ENCODE measurements at regions of chr3 and their contacts with region 1.

Region 1: DNA sequence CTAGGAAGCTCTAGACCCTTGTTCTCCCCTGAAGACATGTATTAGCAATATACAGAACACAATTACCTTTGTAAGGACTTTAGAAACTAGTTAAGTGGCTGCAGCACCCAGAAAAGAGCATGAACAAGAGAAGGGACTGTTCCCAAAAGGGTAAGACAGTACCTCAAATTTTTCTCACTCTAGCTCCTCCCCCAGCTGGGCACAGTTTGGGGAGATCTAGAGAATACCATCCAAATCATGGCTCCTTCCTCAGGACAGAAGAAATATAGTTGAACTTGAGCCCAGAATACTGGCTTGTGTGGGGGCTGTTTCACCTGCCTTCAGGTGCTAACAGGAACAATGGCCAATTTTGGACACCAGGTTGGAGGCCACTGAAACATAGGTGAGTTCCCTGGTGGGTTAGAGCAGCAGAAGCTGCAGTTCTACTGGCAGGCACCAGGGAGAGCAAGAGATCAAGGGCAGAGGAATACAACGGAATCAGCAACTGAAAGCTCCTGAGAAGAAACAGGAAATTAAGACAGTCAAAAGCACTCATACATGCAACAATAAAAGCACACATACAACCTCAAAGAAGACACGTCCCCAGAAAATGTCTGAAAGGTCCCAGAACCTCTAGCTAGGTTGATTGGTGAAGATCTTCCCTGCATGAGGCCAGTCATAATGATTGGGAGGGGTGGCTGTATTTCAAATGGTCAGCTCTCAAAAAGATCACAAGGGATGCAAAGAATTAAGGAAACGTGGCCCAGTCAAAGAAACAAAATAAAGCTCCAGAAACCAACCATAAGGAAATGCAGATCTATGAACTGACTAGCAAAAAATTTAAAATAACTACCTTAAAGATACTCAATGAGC is 104.9 kb upstream of the ASB14 start:
- DNase-seq: peak; percentile 62
- H3K4me3 ChIP-seq: no peak overlapping the region
- H3K27ac ChIP-seq: no peak overlapping the region
- H3K4me1 ChIP-seq: no peaks in the 10 kb centered on the region
- H3K27me3 ChIP-seq: no peaks in the 10 kb centered on the region
- CTCF ChIP-seq: peak; percentile 90 to 95
- POLR2A ChIP-seq: no peak

Region 2: DNA sequence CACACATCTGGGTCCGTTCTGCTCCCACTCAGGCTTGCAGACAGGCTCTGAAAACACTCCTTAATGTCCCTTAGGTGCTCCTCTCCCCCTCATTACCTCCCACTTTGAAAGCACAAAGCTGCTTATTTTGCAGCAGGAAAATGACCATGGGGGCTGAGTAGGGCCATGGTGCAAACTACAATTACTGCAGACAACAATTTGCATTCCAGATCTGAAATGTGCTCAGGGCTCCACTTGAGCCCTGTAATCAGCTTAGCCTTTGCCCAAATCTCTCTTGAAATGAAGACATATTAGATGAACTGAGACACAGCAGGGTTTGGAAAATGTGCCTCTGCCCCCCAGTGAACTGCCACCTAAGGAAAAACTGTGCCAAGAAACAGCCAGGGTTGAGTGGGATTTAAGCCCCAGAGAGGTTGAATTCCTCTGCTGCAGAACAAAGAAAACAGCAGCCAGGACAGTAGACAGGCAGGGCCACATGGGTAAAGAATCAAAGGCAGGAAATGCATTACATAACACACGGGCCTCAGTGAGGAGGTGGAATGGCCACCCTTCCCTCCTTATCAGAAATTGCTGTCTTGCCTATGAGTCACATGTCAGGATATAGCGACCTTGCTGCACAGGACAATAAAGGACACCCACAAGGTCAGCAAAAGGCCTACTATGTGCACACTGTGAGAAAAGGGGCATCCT is 468.9 kb before region 1 on chr3:
- CTCF ChIA-PET with region 1: no interaction called
- POLR2A ChIA-PET with region 1: no interaction called
- dilution Hi-C with region 1: no loop called
- intact Hi-C with region 1: no loop called
- DNase-seq: peak; percentile 76
- H3K4me3 ChIP-seq: no peak overlapping the region
- H3K27ac ChIP-seq: peak overlapping the region; percentile 57
- H3K4me1 ChIP-seq: peaks cover 81% of the 10 kb centered on the region
- H3K27me3 ChIP-seq: no peaks in the 10 kb centered on the region
- CTCF ChIP-seq: no peak
- POLR2A ChIP-seq: no peak

Region 3: DNA sequence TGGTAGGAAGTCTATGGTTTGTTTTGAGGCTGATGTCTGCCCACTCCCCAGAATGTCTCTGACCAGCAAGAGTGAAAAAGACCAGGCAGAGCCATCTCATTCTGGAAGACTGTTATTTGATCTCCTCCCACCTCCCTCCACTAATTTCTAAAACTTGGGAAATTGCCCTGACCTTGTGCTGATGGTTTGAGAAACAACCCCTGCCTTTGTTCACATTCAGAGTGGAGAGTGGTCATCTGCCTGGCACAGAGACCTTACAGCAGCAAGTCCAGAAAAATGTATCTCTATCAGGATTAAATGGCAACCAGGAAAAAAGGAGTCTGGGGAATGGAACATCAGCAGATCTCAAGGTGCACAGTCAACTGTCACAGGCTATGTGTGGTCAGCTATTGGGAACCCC is 311.2 kb before region 1 on chr3:
- CTCF ChIA-PET with region 1: no interaction called
- POLR2A ChIA-PET with region 1: no interaction called
- dilution Hi-C with region 1: no loop called
- intact Hi-C with region 1: no loop called
- DNase-seq: no peak
- H3K4me3 ChIP-seq: no peak overlapping the region
- H3K27ac ChIP-seq: no peak overlapping the region
- H3K4me1 ChIP-seq: peaks cover 5% of the 10 kb centered on the region
- H3K27me3 ChIP-seq: peaks cover 0 to 4% of the 10 kb centered on the region in 2 experiments
- CTCF ChIP-seq: no peak
- POLR2A ChIP-seq: no peak

Region 4: DNA sequence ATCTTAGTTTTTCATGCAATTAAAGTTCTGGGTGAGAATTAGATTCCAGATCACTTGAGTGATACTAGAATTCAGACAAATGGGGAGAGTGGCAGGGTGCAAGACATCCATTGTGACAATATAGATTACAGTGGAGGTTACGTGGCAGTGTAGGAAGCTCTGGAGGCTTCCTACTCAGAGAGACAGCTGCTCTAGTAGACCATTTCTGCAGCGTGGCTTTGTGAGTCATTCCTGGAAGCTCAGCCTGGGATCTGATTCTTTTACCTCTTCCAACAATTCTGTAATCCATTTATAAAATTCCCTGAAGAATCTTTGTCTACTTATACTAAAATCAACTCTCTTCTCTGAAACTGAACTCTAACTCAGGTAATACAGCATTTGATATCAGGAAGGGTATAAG is 14.5 kb before region 1 on chr3:
- CTCF ChIA-PET with region 1: interaction called, 24 read pairs
- POLR2A ChIA-PET with region 1: no interaction called
- dilution Hi-C with region 1: no loop called
- intact Hi-C with region 1: no loop called
- DNase-seq: no peak
- H3K4me3 ChIP-seq: no peak overlapping the region
- H3K27ac ChIP-seq: no peak overlapping the region
- H3K4me1 ChIP-seq: no peaks in the 10 kb centered on the region
- H3K27me3 ChIP-seq: peaks cover 2 to 4% of the 10 kb centered on the region in 2 experiments
- CTCF ChIP-seq: no peak
- POLR2A ChIP-seq: no peak

Region 5: GRCh38 chr3:57446318-57446841 is 49.0 kb after region 1 on chr3:
- CTCF ChIA-PET with region 1: interaction called, 10 read pairs
- POLR2A ChIA-PET with region 1: no interaction called
- dilution Hi-C with region 1: no loop called
- intact Hi-C with region 1: no loop called
- DNase-seq: no peak
- H3K4me3 ChIP-seq: no peak overlapping the region
- H3K27ac ChIP-seq: no peak overlapping the region
- H3K4me1 ChIP-seq: peaks cover 15% of the 10 kb centered on the region
- H3K27me3 ChIP-seq: no peaks in the 10 kb centered on the region
- CTCF ChIP-seq: no peak
- POLR2A ChIP-seq: no peak

Region 6: DNA sequence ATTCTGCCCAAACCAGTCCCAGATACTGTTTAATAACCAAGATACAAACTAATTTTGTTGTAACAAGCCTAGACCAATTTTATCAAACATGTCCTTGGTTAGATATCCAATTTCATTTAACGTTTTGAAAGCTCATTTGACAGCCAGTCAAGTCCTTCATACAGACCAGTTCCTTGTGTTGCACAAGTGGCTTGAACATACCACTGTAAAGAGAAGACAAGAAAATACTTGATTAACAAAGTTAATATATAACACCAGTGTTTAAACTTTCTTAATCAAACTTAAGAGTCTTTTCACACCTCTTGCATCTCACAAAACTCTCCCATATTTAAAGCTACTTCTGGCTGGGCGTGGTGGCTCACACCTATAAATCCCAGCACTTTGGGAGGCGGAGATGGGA is 174.7 kb after region 1 on chr3:
- CTCF ChIA-PET with region 1: interaction called, 48 read pairs
- POLR2A ChIA-PET with region 1: no interaction called
- dilution Hi-C with region 1: no loop called
- intact Hi-C with region 1: no loop called
- DNase-seq: no peak
- H3K4me3 ChIP-seq: no peak overlapping the region
- H3K27ac ChIP-seq: no peak overlapping the region
- H3K4me1 ChIP-seq: peaks cover 2% of the 10 kb centered on the region
- H3K27me3 ChIP-seq: no peaks in the 10 kb centered on the region
- CTCF ChIP-seq: no peak
- POLR2A ChIP-seq: no peak

Region 7: GRCh38 chr3:57692259-57693147 is 295.1 kb after region 1 on chr3 and contains the start of gene DENND6A:
- CTCF ChIA-PET with region 1: interaction called, 6 read pairs
- POLR2A ChIA-PET with region 1: no interaction called
- dilution Hi-C with region 1: no loop called
- intact Hi-C with region 1: loop called (anchors 2 kb)
- DNase-seq: peak; percentile 94
- H3K4me3 ChIP-seq: peak within 1 kb of the TSS; percentile 65 to 90 (median 68)
- H3K27ac ChIP-seq: peak within 1 kb of the TSS; percentile 82
- H3K4me1 ChIP-seq: peaks cover 12% of the 10 kb centered on the region
- H3K27me3 ChIP-seq: no peaks in the 10 kb centered on the region
- CTCF ChIP-seq: no peak
- POLR2A ChIP-seq: peak; percentile 93
- total RNA-seq, gene DENND6A: 25.0 and 31.0 TPM in 2 replicates

Region 8: GRCh38 chr3:57910988-57911387 is 513.6 kb after region 1 on chr3:
- CTCF ChIA-PET with region 1: interaction called, 26 read pairs
- POLR2A ChIA-PET with region 1: no interaction called
- dilution Hi-C with region 1: no loop called
- intact Hi-C with region 1: no loop called
- DNase-seq: peak; percentile 43
- H3K4me3 ChIP-seq: no peak overlapping the region
- H3K27ac ChIP-seq: no peak overlapping the region
- H3K4me1 ChIP-seq: peaks cover 12% of the 10 kb centered on the region
- H3K27me3 ChIP-seq: no peaks in the 10 kb centered on the region
- CTCF ChIP-seq: peak; percentile 38 to 45
- POLR2A ChIP-seq: no peak